GM18951 (cell line): ENCODE measurements at regions of chr20 and their contacts with region 1.

Region 1: GRCh38 chr20:54680872-54681619 is 205.7 kb downstream of the DOK5 start:
- POLR2A ChIP-seq: no peak

Region 2: GRCh38 chr20:56343861-56344381 is 1662.9 kb after region 1 on chr20:
- in situ Hi-C with region 1: loop called (anchors 25 kb)
- POLR2A ChIP-seq: no peak